Right ventricle myocardium inferior (tissue), 1 donor: ENCODE measurements at regions of chr7 and their contacts with region 1.

Region 1: DNA sequence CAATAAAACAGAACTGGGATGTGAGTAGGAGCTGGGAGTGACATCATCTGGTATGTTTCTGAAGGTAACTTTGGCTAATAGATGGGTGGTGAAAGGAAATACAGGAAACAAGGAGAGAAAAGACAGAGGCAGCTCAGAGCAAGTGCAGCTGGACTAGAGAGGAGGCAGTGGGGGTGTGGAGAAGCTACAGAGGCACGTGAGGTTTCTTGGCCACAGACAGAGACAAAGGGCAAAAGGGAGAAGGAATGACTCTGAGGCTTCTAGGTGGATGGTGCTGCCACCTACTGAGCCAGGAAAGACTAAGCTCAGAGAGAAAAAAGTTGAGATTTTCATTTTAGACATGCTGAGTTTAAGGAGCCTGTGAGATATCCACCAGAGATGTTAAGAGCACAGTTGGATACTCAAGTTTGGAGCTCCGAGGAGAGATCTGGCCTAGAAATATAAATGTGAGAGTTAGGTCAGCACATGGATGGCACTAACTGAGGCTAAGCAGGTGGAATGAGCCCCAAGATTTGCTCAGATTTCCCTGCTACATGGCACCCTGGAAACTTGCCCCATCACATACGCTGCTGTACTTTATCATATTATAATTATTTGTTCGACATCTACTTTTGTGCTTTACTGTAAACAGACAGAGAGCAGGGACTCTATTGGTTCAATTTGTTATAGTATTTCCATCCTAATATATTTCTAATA is 293.0 kb upstream of the IMMP2L start:
- DNase-seq: no peak
- ATAC-seq: peak; percentile 82

Region 2: GRCh38 chr7:111763221-111763801 is 92.0 kb before region 1 on chr7:
- intact Hi-C with region 1: loop called (anchors 5 kb)
- DNase-seq: no peak
- ATAC-seq: peak; percentile 57